ENCODE measurements at regions of chr17 and their contacts with region 1.

Region 1: DNA sequence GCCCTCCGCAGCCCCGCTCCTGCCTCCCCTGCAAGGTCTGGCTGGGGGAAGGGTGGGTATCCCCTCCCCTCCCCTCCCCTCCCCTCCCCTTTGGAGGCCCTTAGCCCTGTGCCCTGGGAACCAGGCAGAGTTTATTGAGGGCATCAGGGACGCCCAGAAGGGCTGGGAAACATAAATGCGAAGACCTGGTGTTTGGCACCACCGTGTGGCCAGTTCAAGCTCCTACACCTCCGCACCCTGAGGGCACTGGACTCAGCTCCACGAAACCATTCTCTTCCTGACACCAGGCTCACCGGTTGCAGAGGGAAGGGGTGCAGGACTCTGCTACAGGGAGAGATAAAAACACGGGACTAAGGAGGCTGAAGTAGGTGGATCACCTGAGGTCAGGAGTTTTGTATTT is 1.0 kb upstream of the AIPL1 start:
- DNase-seq: peak; percentile 79
- ATAC-seq: peak; percentile 93
- H3K4me3 Mint-ChIP-seq: no peak overlapping the region; the same call in 1 of the 2 replicates
- H3K27ac Mint-ChIP-seq: no peak overlapping the region; the same call in 1 of the 2 replicates
- H3K4me1 Mint-ChIP-seq: peaks cover 43% of the 10 kb centered on the region
- H3K27me3 Mint-ChIP-seq: 0 out of 2 replicates have a peak, but pooled peaks cover 2% of the 10 kb centered on the region
- CTCF ChIP-seq: peak; percentile 74

Region 2: GRCh38 chr17:6279659-6280058 is 156.3 kb before region 1 on chr17:
- CTCF ChIA-PET with region 1: interaction called, 13 read pairs
- POLR2A ChIA-PET with region 1: no interaction called
- DNase-seq: peak; percentile 81
- ATAC-seq: peak; percentile 92
- H3K4me3 Mint-ChIP-seq: no peak overlapping the region
- H3K27ac Mint-ChIP-seq: no peak overlapping the region
- H3K4me1 Mint-ChIP-seq: peaks cover 10% of the 10 kb centered on the region
- H3K27me3 Mint-ChIP-seq: no peaks in the 10 kb centered on the region; the same call in 1 of the 2 replicates
- CTCF ChIP-seq: no peak

Region 3: GRCh38 chr17:6306820-6307219 is 129.1 kb before region 1 on chr17:
- CTCF ChIA-PET with region 1: interaction called, 10 read pairs
- POLR2A ChIA-PET with region 1: no interaction called
- DNase-seq: no peak
- ATAC-seq: no peak
- H3K4me3 Mint-ChIP-seq: no peak overlapping the region
- H3K27ac Mint-ChIP-seq: no peak overlapping the region
- H3K4me1 Mint-ChIP-seq: peaks cover 4% of the 10 kb centered on the region
- H3K27me3 Mint-ChIP-seq: no peaks in the 10 kb centered on the region
- CTCF ChIP-seq: no peak

Region 4: DNA sequence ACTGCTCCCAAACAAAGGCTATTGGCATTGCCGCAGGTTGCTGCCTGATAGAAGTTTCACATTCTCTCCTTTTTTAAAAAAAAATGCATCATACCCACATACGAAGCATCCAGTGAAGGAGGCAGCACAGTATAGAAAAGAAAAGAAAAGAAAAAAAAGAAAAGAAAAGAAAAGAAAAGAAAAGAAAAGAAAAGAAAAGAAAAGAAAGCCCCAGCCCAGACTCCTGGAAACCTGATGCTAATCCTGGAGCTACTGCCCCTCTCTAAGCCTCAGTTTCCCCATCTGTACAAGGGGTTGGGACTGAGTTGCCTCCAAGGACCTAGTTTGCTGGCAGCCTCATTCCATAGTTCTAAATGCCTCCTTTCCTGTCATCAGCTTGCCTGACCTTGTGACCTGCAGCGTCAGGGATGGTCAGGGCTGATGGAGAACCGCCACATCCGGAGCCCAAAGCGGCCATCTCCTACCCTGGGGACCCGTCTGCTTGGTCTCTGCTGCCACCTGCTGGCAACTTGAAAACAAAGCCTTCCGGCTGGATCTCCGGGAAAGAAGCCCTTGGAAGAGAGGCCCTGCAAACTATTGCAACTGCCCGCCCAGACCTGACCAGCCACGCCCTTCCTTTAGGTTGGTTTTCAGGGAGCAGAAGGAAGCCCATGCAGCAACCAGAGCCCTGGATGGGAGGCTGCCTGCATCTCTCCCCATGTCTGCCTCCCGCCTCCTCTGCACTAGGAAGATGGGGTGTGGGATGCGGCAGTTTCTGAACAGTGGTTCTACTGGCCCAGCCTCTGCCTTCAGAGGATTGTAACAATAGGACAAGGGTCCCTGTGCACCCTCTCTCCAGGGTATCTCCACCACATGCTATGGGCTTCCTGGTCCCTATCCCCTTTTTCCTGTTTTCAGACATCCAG is 14.0 kb before region 1 on chr17:
- CTCF ChIA-PET with region 1: interaction called, 15 read pairs
- POLR2A ChIA-PET with region 1: no interaction called
- DNase-seq: peak; percentile 90
- ATAC-seq: peak; percentile 76
- H3K4me3 Mint-ChIP-seq: no peak overlapping the region
- H3K27ac Mint-ChIP-seq: no peak overlapping the region
- H3K4me1 Mint-ChIP-seq: peaks cover 20% of the 10 kb centered on the region
- H3K27me3 Mint-ChIP-seq: no peaks in the 10 kb centered on the region
- CTCF ChIP-seq: peak; percentile 82

Region 5: DNA sequence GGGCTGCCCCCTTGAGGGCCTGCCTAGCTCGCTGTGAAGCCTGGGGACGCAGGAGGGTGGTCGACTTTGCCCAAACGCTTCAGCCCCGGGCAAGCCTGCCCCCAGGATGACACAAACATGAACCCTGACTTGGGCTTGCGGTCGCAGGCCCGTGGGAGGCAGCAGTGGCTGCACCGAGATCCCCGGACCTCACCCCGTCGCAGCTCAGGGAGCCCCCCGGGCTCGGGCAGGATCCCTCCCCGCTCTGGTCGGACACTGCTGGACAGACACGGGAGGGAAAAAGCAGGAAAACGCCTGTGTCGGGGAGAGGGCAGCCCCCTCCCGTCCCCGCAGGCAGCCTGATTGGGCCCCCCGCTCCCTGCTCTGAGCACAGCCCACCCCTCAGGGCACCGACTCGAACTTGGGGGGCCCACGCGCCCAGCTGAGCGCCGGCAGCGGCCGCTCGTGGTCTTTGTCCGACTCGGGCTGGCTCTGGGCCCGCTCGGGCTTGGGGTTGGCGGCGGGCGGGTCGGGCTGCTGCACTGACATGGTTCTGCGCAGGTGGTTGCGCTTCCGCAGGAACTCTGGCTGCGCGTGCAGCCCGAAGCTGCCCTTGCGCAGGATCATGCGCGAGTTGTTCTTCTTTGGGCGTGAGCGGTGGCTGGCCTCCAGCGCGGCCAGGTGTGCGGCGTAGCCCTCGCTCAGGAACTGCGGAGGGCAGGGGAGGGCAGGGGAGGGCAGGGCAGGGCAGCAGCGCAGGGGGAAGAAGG is 19.2 kb after region 1 on chr17:
- CTCF ChIA-PET with region 1: interaction called, 18 read pairs
- POLR2A ChIA-PET with region 1: no interaction called
- DNase-seq: peak; percentile 62
- ATAC-seq: peak; percentile 49
- H3K4me3 Mint-ChIP-seq: peak overlapping the region; percentile 63
- H3K27ac Mint-ChIP-seq: no peak overlapping the region
- H3K4me1 Mint-ChIP-seq: peaks cover 45% of the 10 kb centered on the region
- H3K27me3 Mint-ChIP-seq: no peaks in the 10 kb centered on the region; the same call in 1 of the 2 replicates
- CTCF ChIP-seq: no peak